WTC11 (cell line): ENCODE measurements at regions of chr15 and their contacts with region 1.

Region 1: DNA sequence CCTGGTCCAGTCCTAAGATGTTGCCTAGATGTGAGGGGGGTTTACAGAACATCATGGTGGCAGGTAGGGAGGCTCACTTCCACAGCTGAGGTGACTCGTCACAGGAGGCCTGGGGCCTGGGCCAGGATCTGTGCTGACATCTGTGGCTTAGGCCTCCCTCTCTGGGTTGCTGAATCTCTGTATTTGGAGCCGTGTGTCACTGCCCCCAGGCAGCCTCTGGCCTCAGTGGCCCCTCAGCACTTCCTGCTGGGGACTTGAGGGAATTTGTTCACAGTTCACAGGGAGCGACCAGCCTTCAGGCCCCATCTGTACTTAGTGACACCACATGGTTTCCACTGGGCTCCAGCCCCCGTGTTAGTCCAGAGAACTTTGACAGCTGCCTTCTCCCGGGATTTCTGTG is 41.7 kb upstream of the ADAMTSL3 start:
- DNase-seq: no peak
- ATAC-seq: no peak
- H3K4me3 Mint-ChIP-seq: no peak overlapping the region
- H3K27ac Mint-ChIP-seq: no peak overlapping the region
- H3K4me1 Mint-ChIP-seq: no peaks in the 10 kb centered on the region
- H3K27me3 Mint-ChIP-seq: no peaks in the 10 kb centered on the region
- CTCF ChIP-seq: no peak

Region 2: GRCh38 chr15:83559310-83559966 is 52.8 kb before region 1 on chr15:
- CTCF ChIA-PET with region 1: no interaction called
- POLR2A ChIA-PET with region 1: no interaction called
- DNase-seq: peak; percentile 72
- ATAC-seq: peak; percentile 90
- H3K4me3 Mint-ChIP-seq: no peak overlapping the region
- H3K27ac Mint-ChIP-seq: no peak overlapping the region
- H3K4me1 Mint-ChIP-seq: 0 out of 2 replicates have a peak, but pooled peaks cover 2% of the 10 kb centered on the region
- H3K27me3 Mint-ChIP-seq: no peaks in the 10 kb centered on the region
- CTCF ChIP-seq: peak; percentile 70

Region 3: DNA sequence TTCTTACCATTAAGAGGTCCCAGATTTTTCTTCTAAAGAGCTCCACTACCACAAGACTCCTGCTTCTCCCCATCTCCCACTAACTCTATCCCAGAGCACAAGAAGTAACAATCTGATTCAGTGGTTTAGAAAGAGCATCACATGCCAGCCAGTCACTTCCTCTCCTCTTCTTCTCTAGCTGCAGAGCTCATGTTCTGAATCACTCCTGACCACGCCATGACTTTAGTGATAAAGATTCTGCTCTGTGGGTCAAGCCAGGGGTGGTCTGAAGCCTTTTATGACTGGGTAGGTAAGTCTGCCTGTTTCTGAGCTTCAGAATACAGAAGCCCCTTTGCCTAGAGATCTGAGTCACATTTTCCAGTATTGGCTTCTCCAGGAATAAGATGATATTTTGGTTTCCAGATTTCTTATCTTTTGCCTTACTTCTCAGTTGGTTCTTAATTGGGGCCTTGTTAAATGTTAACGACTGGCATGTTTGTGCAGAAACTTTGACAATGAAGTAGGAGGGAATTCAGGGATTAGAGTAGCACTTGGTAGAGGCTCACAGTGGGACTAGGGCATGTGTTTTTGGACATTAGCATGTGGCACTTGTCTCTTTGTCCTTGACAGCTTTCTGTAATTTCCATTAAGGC is 14.1 kb after region 1 on chr15:
- CTCF ChIA-PET with region 1: no interaction called
- POLR2A ChIA-PET with region 1: interaction called, 11 read pairs
- DNase-seq: no peak
- ATAC-seq: no peak
- H3K4me3 Mint-ChIP-seq: no peak overlapping the region
- H3K27ac Mint-ChIP-seq: no peak overlapping the region
- H3K4me1 Mint-ChIP-seq: peaks cover 3% of the 10 kb centered on the region
- H3K27me3 Mint-ChIP-seq: no peaks in the 10 kb centered on the region
- CTCF ChIP-seq: no peak